ENCODE measurements at regions of chr6 and their contacts with region 1.

Region 1: DNA sequence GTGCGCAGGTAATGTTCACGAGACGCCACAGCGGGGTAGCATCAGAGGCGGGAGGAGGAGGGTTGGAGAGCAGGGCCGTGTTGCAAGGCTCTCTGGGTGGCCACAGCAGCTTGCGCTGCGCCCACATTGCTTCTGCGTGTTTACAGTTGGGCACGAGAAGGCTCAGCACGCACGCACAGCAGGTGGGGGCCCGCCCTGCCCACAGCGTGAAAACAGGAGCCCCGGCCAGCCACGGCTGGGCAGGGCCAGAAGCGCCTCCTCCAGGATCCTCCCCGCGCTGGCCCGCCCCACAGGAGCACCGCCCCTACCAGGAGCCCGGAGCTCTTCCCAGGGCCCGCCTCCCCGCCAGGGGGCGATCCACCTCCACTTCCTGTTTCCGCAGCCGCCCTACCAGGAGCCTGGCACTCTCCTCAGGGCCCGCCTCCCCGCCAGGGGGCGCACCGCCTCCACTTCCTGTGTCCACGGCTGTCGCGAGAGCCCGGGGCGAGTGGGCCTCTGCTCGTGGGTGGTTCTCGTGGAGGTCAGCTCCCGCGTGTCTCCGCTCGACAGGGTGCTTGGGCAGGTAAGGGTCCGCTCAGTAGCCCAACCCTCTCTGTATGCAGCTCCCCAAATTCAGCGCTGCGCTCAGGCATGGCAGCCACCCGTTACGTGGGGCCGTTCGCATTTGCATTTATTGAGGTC is at the start of gene FAM50B:
- DNase-seq: peak; percentile 89
- H3K4me3 Mint-ChIP-seq: peak within 1 kb of the TSS; percentile 66
- H3K27ac Mint-ChIP-seq: no peak within 1 kb of the TSS
- H3K4me1 Mint-ChIP-seq: peaks cover 9% of the 10 kb centered on the region
- H3K27me3 Mint-ChIP-seq: no peaks in the 10 kb centered on the region
- CTCF ChIP-seq: peak; percentile 73
- total RNA-seq, gene FAM50B: 5.8 and 7.8 TPM in 2 replicates

Region 2: DNA sequence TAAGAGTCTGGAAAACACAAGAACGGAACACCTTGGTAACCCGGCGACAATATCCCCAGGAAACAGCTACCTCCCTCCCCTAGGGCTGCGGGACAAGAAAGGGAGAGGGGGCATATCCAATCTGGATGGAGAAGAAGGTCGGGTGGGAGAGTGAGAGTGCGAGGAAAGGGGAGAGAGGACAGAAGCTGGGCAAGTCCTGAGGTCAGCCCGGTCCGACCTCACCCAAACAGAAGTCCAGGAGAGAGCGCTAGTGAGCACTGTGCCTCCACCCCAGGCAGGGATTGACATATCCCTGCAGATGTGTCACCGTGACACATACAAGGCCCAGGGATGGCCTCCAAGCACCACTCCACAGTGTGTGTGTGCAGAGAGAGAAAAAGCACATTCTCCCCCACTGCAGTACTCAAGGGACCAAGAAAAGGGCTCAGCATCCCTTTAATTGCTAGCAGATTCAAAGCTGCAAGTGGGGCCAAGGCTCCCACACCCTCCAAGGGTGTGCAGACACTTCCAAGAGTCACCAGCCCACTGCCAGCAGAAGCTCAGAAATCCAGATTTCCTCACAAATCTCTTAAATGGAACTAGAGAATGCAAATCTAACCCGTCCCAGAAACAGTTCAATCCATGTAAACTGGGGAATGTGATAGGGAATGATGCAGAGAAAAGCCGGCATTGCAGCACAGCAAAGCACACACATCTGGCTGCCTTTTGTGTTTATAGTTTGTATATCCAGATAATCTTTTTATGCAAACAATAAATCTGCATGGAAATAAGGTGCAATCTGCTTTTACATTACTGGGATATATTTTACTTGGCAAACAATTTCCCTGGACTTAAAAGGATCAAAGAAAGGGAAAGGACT is 100.6 kb before region 1 on chr6:
- CTCF ChIA-PET with region 1: interaction called, 14 read pairs
- intact Hi-C with region 1: no loop called
- DNase-seq: peak; percentile 70
- H3K4me3 Mint-ChIP-seq: peak overlapping the region; percentile 85
- H3K27ac Mint-ChIP-seq: peak overlapping the region; percentile 65
- H3K4me1 Mint-ChIP-seq: peaks cover 34% of the 10 kb centered on the region
- H3K27me3 Mint-ChIP-seq: no peaks in the 10 kb centered on the region
- CTCF ChIP-seq: peak; percentile 15

Region 3: GRCh38 chr6:3825851-3826581 is 23.0 kb before region 1 on chr6:
- CTCF ChIA-PET with region 1: interaction called, 11 read pairs
- intact Hi-C with region 1: no loop called
- DNase-seq: peak; percentile 86
- H3K4me3 Mint-ChIP-seq: peak overlapping the region; percentile 52
- H3K27ac Mint-ChIP-seq: peak overlapping the region; percentile 88
- H3K4me1 Mint-ChIP-seq: peaks cover 30% of the 10 kb centered on the region
- H3K27me3 Mint-ChIP-seq: no peaks in the 10 kb centered on the region
- CTCF ChIP-seq: no peak

Region 4: DNA sequence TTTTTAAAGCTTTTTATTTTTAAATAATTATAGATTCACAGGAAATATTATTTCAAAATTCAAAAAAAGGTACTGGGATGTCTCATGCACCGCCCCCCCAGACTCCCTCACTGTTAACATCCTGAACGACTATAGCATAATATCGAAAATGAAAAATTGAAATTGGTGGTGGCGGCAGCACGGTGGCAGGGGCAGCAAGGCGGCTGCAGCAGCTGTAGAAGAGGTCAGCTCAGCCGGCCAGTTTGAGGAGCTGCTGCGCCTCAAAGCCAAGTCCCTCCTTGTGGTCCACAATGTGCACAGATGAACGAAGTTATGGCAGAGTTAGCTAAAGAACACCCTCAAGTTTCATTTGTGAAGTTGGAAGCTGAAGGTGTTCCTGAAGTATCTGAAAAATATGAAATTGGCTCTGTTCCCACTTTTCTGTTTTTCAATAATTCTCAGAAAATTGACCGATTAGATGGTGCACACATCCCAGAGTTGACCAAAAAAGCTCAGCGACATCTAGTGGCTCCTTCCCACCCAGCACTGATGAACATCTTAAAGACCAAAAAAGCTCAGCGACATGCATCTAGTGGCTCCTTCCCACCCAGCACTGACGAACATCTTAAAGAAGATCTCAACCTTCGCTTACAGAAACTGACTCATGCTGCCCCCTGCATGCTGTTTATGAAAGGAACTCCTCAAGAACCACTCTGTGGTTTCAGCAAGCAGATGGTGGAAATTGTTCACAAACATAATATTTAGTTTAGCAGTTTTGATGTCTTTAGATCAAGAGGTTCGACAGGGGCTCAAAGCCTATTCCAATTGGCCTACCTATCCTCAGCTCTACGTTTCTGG is 129.0 kb after region 1 on chr6:
- CTCF ChIA-PET with region 1: interaction called, 15 read pairs
- intact Hi-C with region 1: loop called (anchors 10 kb)
- DNase-seq: peak; percentile 29
- H3K4me3 Mint-ChIP-seq: no peak overlapping the region
- H3K27ac Mint-ChIP-seq: no peak overlapping the region
- H3K4me1 Mint-ChIP-seq: peaks cover 8% of the 10 kb centered on the region
- H3K27me3 Mint-ChIP-seq: no peaks in the 10 kb centered on the region
- CTCF ChIP-seq: peak; percentile 26

Region 5: DNA sequence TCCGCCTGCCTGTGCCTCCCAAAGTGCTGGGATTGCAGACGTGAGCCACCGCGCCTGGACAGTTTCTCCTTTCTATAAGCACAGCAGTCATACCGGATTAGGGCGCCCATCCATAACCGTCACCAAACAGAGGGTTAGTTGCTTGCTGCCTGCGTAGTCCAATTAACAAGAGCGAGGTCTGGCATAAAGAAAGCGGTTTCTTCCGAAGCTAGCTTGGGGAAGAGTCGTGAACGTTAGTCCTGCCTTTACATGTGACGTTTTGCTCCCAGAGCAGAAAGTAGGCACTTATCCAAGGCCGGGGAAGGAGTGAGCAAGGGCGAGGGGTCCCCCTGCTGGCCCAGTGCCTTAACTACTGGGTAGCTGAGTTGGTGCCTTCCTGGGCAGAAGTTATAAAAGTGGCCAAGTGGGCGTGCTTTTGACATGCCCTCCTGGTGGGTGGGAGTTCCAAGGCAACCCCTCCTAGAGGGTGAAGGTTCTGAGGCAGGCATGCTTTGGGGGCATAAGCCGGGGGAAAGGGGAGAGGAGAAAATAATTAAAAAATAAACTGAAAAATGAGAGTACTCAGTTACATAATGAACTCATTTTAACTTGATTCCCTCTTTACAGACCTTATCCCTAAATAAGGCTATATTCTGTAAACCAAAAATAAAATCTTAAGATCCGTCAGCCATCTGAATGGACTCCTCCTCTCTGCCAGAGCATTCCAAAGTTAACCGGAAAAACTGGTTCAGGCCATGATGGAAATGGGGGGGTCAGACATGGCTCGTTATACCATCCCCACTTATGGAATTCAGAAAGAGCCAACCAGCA is 141.8 kb after region 1 on chr6:
- CTCF ChIA-PET with region 1: interaction called, 13 read pairs
- intact Hi-C with region 1: no loop called
- DNase-seq: peak; percentile 85
- H3K4me3 Mint-ChIP-seq: peak overlapping the region; percentile 60
- H3K27ac Mint-ChIP-seq: peak overlapping the region; percentile 54
- H3K4me1 Mint-ChIP-seq: peaks cover 59% of the 10 kb centered on the region
- H3K27me3 Mint-ChIP-seq: no peaks in the 10 kb centered on the region
- CTCF ChIP-seq: peak; percentile 74